Ascending aorta (tissue), 2 donors: ENCODE measurements at regions of chr19 and their contacts with region 1.

Region 1: DNA sequence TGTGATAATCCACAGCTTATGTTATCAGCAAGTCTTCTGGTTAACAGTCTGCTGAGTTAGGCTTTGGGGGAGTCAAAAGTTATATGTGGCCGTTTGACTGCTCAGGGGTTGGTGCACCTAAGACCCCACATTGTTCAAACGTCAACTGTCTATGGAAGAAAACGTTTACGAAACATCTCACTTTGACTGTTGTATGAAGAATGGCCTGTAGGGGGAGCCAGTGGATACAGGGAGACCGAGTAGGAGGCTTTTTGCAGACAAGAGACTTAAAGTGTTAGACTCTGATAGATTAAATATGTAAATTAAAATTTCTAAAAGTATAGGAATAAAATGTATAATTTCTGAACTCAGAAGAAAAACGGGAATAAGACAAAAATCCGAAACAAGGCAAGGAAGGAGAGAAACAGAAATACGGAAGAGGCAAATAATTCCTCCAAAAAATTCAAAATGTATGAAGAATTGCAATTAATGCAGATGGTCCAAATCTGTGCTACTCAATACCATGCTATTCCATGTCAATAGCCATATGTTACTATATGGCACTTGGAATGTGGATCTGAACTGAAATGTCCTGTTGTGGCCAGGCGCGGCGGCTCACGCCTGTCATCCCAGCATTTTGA is 37.8 kb downstream of the TNFSF14 start:
- DNase-seq: peak in 1 of 2 donors; percentile 84
- H3K4me3 ChIP-seq: no peak overlapping the region
- H3K27ac ChIP-seq: no peak overlapping the region
- H3K4me1 ChIP-seq: no peaks in the 10 kb centered on the region
- H3K27me3 ChIP-seq: no peaks in the 10 kb centered on the region
- CTCF ChIP-seq: peak; percentile 57 to 84 (median 73)

Region 2: DNA sequence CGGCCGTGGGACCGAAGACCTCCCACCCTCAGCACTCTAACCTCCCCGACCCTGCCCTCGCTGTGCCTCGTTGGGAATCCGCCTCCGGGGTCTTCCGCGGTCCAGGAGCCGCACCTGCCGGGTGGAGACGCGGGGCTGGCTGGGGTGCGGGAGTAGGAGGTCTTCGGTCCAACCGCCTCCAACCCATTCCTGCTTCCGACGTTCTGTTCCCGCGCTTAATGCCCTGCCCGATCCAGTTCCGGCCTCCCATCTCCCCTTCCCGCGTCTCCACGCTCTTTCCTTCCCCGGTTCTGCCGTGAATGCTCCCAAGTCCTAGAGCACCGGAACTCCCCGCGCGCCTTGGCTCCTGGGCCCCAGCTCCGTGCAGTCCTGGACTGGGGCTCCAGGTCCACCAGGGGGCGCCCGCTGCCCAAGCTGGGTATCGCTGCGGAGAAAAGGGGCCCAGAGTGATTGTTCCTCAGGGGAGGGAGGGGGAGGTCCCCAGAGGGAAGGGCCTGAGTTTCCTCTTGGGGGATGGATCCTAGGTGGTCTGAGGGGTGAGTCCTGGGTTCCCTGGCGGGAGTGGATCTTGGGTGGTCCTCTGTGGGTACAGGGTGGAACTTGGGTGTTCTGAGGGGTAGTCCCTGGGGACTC is 115.3 kb before region 1 on chr19:
- intact Hi-C with region 1: loop called (anchors 1 kb)
- DNase-seq: peak; percentile 31 to 90
- H3K4me3 ChIP-seq: peak overlapping the region; percentile 46 to 73
- H3K27ac ChIP-seq: peak overlapping the region in 1 of 2 donors; percentile 53
- H3K4me1 ChIP-seq: peaks cover 0 to 4% of the 10 kb centered on the region in 2 donors
- H3K27me3 ChIP-seq: no peaks in the 10 kb centered on the region
- CTCF ChIP-seq: peak; percentile 85 to 98 (median 91)